ENCODE measurements at regions of chr16 and their contacts with region 1.

Region 1: DNA sequence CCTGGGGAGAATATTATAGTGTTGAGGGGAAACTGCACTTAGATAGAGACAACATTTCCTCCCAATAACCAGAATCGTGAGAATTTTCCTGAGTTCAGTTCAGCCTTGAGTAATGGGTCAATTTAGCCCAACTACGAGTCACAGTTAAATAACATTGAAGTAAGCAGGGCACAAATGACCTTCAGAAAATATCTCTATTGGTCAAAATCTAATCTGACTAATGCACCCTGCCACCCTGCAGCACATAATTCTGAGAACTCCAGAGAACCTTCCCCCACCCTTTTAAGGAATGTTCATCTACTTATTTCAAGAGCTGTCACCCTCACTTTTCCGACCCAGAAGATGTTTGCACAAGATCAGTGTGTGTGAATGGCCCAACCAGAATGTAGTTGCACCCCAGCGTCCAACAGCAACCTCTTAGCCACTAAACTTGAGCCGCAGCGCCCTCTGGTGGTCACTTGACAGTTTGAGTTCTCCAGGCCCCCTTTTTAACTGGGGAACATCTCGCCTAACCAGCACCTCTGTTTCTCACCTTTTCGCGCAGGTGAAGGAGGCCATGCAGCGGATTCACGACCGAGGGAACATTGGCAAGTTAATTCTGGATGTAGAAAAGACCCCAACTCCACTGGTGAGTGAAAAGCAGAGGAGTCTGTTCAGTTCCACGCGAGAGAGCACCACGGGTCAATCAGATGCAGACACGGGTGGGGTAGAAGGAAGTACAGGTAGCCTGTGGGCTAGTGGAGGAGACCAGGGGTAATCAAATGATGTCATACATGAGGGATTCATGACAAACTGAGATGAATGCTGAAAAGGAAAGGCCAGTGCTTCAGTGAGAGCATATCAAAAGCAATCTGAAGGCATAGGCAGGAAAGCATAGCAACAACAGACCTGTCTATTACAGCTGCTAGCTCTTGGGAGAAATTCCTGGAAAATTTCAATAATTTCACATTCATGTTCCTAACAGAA is 50.8 kb upstream of the CLEC3A start:
- DNase-seq: peak; percentile 55
- H3K4me3 ChIP-seq: no peak overlapping the region
- H3K27ac ChIP-seq: no peak overlapping the region
- H3K27me3 ChIP-seq: peaks cover 2% of the 10 kb centered on the region
- CTCF ChIP-seq: peak; percentile 85

Region 2: DNA sequence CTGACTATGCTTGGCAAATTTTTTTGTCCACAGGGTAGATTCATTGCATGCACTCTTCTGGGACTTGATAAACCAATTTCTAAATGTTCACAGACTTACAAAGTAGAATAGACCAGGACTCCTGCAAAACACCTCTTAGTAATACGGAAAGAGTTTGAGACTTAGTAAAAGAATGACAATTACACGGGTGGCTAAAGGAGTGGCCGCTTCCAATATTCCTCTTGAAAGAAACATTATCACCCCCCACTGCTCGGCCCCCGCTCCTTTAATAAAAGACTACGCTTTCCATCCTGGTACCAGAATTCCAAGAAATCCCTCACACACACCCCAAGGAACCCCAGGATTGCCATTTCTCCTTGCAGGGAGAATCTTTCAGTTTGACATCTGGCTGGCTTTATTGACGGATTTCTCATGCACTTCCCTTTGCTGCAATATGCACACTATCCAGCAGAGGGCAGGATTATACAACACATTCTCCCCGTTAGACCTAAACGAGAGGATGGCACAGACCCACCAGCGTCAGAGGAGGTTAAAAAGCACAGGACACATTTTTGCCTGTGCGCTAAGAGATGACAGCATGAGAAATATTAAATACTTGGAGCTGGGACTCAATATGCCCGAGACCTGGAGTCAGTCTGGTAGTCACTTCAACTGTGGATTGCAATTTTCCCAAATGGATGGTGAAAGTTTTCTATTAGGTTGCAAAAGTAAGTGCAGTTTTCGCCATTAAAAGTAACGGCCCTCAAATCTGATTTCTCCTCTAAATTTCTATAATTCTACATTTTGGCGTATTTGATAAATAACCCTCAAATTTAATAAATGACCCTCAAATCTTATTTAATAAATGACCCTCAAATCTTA is 295.9 kb before region 1 on chr16:
- in situ Hi-C with region 1: loop called (anchors 25 kb)
- DNase-seq: peak; percentile 69
- H3K4me3 ChIP-seq: no peak overlapping the region
- H3K27ac ChIP-seq: no peak overlapping the region
- H3K27me3 ChIP-seq: no peaks in the 10 kb centered on the region
- CTCF ChIP-seq: peak; percentile 89

Region 3: DNA sequence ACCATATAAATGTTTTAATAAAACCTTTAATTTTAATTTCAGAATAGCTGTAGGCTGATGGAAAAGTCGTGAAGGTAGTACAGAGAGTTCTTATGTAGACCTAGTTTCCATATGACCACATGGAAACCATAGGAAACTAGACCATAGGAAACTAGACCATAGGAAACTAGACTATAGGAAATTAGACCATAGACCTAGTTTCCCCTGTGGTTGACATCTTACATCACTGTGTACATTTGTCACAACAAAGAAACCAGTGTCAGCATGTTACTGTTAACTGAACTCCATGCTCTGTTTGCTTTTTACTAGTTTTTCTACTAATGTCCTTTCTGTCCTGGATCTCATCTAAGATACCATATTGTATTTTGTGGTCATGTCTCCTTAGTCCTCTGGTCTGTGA is 234.7 kb before region 1 on chr16:
- in situ Hi-C with region 1: no loop called
- DNase-seq: no peak
- H3K4me3 ChIP-seq: no peak overlapping the region
- H3K27ac ChIP-seq: no peak overlapping the region
- H3K27me3 ChIP-seq: no peaks in the 10 kb centered on the region
- CTCF ChIP-seq: no peak

Region 4: GRCh38 chr16:77937473-77938149 is 34.0 kb before region 1 on chr16:
- in situ Hi-C with region 1: no loop called
- DNase-seq: no peak
- H3K4me3 ChIP-seq: no peak overlapping the region
- H3K27ac ChIP-seq: no peak overlapping the region
- H3K27me3 ChIP-seq: no peaks in the 10 kb centered on the region
- CTCF ChIP-seq: no peak

Region 5: GRCh38 chr16:78249068-78249467 is 277.5 kb after region 1 on chr16:
- in situ Hi-C with region 1: no loop called
- DNase-seq: no peak
- H3K4me3 ChIP-seq: no peak overlapping the region
- H3K27ac ChIP-seq: no peak overlapping the region
- H3K27me3 ChIP-seq: no peaks in the 10 kb centered on the region
- CTCF ChIP-seq: no peak

Region 6: DNA sequence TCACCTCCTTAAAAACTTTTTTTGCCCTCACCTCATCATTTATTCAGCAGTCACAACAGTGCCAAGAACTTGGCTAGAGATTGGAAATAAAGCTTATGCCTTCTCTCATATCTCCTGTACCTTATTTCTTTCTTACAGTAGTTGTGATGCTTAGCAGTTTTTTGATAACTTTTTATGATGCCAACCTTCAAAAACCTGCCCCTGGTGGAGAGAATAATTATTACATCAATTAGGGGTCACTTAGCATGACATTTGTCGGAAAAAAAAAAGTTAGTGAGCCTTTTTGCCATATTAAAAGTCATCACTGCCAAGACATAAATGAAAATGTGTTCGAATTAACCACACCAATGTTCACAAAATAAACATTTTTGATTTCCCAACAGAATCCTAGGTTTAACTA is 424.5 kb after region 1 on chr16:
- in situ Hi-C with region 1: no loop called
- DNase-seq: no peak
- H3K4me3 ChIP-seq: no peak overlapping the region
- H3K27ac ChIP-seq: no peak overlapping the region
- H3K27me3 ChIP-seq: no peaks in the 10 kb centered on the region
- CTCF ChIP-seq: peak; percentile 2

Measured in brain microvascular endothelial cell (primary cell).